ENCODE measurements at regions of chr10 and their contacts with region 1.

Region 1: GRCh38 chr10:79938728-79939406 is 10.0 kb downstream of the SFTPD start:
- DNase-seq: peak in 1 of 2 donors; percentile 54
- ATAC-seq: peak in 7 of 8 donors; percentile 66 to 87 (median 75)
- H3K4me3 ChIP-seq: no peak overlapping the region
- H3K27ac ChIP-seq: peak overlapping the region in 1 of 10 donors; percentile 80
- H3K4me1 ChIP-seq: peaks cover 0 to 31% (median 0%) of the 10 kb centered on the region in 9 donors
- H3K27me3 ChIP-seq: no peaks in the 10 kb centered on the region
- CTCF ChIP-seq: no peak

Region 2: GRCh38 chr10:80046629-80047441 is 108.0 kb after region 1 on chr10:
- intact Hi-C with region 1: loop called in 1 of 10 experiments (anchors 10 kb)
- DNase-seq: peak; percentile 70 to 71
- ATAC-seq: peak; percentile 77 to 95 (median 93)
- H3K4me3 ChIP-seq: no peak overlapping the region
- H3K27ac ChIP-seq: no peak overlapping the region
- H3K4me1 ChIP-seq: no peaks in the 10 kb centered on the region
- H3K27me3 ChIP-seq: no peaks in the 10 kb centered on the region
- CTCF ChIP-seq: peak; percentile 70 to 98 (median 89)

Region 3: GRCh38 chr10:80405626-80406025 is 466.8 kb after region 1 on chr10:
- intact Hi-C with region 1: no loop called
- DNase-seq: no peak
- ATAC-seq: peak in 1 of 8 donors; percentile 21
- H3K4me3 ChIP-seq: no peak overlapping the region
- H3K27ac ChIP-seq: peak overlapping the region in 7 of 10 donors; percentile 18 to 48 (median 41)
- H3K4me1 ChIP-seq: peaks cover 0 to 43% (median 25%) of the 10 kb centered on the region in 9 donors
- H3K27me3 ChIP-seq: peaks cover 0 to 9% (median 0%) of the 10 kb centered on the region in 7 donors
- CTCF ChIP-seq: no peak

Measured in heart right ventricle (tissue), 16 donors.